GM10248 (cell line): ENCODE measurements at regions of chr10 and their contacts with region 1.

Region 1: GRCh38 chr10:100481462-100482081 is 18.8 kb downstream of the WNT8B start:
- DNase-seq: peak; percentile 89
- CTCF ChIP-seq: no peak

Region 2: DNA sequence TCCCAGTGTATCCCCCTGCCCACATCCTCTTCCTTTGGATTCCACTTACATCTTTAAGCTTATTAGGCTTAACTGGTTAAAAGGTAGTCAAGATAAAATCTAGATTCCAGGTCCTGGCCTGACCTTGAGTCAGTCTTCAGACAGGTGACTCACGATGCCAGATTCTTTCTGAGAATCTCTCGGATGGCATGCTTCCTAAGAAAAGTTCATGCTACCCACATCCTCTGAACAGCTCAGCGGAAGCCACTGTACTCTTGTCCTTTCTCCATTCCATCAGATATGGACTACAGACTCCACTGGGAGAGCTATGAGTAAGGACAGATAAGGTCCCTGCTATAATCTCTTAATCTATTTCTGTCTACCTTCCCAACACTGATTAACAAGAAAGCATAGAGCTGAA is 515.3 kb before region 1 on chr10:
- CTCF ChIA-PET with region 1: no interaction called
- POLR2A ChIA-PET with region 1: no interaction called
- DNase-seq: no peak
- CTCF ChIP-seq: no peak

Region 3: GRCh38 chr10:100229819-100230422 is 251.7 kb before region 1 on chr10:
- CTCF ChIA-PET with region 1: no interaction called
- POLR2A ChIA-PET with region 1: no interaction called
- DNase-seq: no peak
- CTCF ChIP-seq: no peak

Region 4: GRCh38 chr10:100297242-100297641 is 184.3 kb before region 1 on chr10:
- CTCF ChIA-PET with region 1: interaction called, 11 read pairs
- POLR2A ChIA-PET with region 1: no interaction called
- DNase-seq: no peak
- CTCF ChIP-seq: no peak

Region 5: GRCh38 chr10:100470367-100470766 is 11.2 kb before region 1 on chr10:
- CTCF ChIA-PET with region 1: interaction called, 27 read pairs
- POLR2A ChIA-PET with region 1: no interaction called
- DNase-seq: no peak
- CTCF ChIP-seq: no peak

Region 6: GRCh38 chr10:100502926-100503494 is 21.4 kb after region 1 on chr10:
- CTCF ChIA-PET with region 1: interaction called, 99 read pairs
- POLR2A ChIA-PET with region 1: no interaction called
- DNase-seq: no peak
- CTCF ChIP-seq: no peak

Region 7: DNA sequence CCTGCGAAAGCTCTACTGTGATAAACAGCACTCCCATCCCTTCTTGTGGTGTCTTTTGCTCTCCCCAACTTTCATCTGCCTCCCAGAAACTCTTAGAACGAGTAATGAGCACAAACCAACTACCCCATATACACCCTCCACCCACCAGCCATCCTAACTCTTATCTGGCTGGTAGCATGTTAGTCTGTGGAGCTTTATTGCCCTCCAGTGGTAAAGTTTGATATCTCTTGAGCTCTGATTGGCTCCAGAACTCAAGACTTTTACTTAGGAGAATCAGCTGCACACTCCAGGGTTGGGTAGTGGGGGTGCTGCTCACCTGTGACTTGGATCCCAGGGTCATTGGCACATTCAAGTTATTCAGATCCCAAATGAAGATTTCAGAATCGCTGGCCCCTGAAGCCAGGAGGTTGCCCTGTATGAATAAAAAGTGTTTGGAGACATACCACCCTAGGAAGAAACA is 27.1 kb after region 1 on chr10:
- CTCF ChIA-PET with region 1: interaction called, 16 read pairs
- POLR2A ChIA-PET with region 1: no interaction called
- DNase-seq: peak; percentile 53
- CTCF ChIP-seq: peak; percentile 34

Region 8: DNA sequence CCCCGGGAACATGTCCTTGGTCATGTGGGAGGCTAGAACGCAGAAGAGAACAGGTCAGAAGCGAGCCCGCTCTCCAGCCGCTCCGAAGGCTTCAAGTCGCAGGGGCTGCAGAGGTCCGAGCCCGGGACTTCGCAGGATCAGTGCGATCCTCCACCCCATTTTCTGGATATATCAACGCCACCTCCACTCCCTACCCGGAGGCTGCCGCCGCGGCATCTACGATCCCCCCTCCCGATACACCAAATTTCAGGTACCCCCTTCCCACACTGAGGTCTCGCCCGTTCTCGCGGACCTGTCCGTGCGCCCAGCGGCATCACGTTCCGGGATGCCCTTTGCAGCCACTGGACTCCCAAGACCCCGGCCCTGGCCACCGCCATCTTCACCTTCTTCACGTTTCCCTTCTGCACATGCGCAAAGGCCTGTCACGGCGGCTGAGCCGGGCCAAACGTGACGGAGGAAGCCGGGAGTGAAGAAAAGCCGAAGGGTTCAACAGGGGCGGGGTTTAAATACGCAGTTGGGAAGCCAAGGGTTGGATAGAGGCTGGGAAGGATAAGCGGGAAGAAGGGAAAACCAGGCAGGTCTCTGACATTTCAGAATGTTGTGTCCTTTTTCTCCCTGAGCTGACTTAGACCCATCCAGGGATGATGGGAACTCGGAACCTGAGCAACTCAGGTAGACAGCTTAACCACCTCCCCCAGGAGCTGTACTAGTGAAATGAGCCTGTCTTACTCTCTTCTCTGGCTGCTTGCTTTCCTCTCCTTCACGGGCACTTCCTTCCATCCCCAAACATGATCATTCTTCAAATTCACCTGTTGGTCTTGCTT is 48.1 kb after region 1 on chr10 and contains the start of gene NDUFB8:
- CTCF ChIA-PET with region 1: interaction called, 14 read pairs
- POLR2A ChIA-PET with region 1: no interaction called
- DNase-seq: peak; percentile 84
- CTCF ChIP-seq: no peak

Region 9: GRCh38 chr10:100653957-100654781 is 172.6 kb after region 1 on chr10:
- CTCF ChIA-PET with region 1: no interaction called
- POLR2A ChIA-PET with region 1: no interaction called
- DNase-seq: no peak
- CTCF ChIP-seq: no peak

Region 10: DNA sequence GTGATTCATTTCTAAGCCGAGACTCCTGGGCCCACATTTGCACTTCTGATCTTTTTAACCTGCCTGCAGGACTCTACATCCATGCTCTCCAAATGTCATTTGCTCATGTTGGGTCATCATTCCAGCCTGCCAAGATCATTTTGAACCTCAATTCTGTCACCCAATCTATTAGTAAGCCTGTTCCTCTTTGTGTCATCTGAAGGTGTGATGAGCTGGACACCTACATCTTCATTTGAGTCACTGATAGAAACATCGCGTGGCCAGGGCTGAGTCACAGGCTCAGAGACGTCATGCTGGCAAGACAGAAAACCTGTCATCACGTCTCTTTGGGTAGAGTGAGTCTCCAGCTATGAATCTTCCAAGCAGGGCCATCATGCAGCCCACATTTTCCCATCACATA is 365.9 kb after region 1 on chr10:
- CTCF ChIA-PET with region 1: no interaction called
- POLR2A ChIA-PET with region 1: no interaction called
- DNase-seq: no peak
- CTCF ChIP-seq: no peak